HepG2 (cell line): ENCODE measurements at regions of chr9 and their contacts with region 1.

Region 1: GRCh38 chr9:99140685-99141314 is 35.9 kb downstream of the TGFBR1 start:
- DNase-seq: peak; percentile 35
- ATAC-seq: peak; percentile 79
- H3K4me3 ChIP-seq: no peak overlapping the region
- H3K27ac ChIP-seq: no peak overlapping the region
- H3K4me1 ChIP-seq: no peaks in the 10 kb centered on the region
- H3K27me3 ChIP-seq: no peaks in the 10 kb centered on the region
- CTCF ChIP-seq: peak; percentile 75
- EP300 ChIP-seq: no peak
- POLR2A ChIP-seq: no peak
- RAD21 ChIP-seq: peak; percentile 77

Region 2: GRCh38 chr9:98974994-98975712 is 165.6 kb before region 1 on chr9:
- CTCF ChIA-PET with region 1: interaction called, 18 read pairs
- POLR2A ChIA-PET with region 1: no interaction called
- in situ Hi-C with region 1: loop called (anchors 10 kb)
- intact Hi-C with region 1: no loop called
- DNase-seq: peak; percentile 34
- ATAC-seq: peak; percentile 94
- H3K4me3 ChIP-seq: peak overlapping the region in 1 of 3 experiments; percentile 15; a peak in 1 of 6 replicates
- H3K27ac ChIP-seq: no peak overlapping the region
- H3K4me1 ChIP-seq: peaks cover 6% of the 10 kb centered on the region
- H3K27me3 ChIP-seq: peaks cover 4 to 43% of the 10 kb centered on the region in 2 experiments; a peak in 3 of 5 replicates
- CTCF ChIP-seq: peak; percentile 94
- EP300 ChIP-seq: no peak
- POLR2A ChIP-seq: no peak
- RAD21 ChIP-seq: peak; percentile 76

Region 3: DNA sequence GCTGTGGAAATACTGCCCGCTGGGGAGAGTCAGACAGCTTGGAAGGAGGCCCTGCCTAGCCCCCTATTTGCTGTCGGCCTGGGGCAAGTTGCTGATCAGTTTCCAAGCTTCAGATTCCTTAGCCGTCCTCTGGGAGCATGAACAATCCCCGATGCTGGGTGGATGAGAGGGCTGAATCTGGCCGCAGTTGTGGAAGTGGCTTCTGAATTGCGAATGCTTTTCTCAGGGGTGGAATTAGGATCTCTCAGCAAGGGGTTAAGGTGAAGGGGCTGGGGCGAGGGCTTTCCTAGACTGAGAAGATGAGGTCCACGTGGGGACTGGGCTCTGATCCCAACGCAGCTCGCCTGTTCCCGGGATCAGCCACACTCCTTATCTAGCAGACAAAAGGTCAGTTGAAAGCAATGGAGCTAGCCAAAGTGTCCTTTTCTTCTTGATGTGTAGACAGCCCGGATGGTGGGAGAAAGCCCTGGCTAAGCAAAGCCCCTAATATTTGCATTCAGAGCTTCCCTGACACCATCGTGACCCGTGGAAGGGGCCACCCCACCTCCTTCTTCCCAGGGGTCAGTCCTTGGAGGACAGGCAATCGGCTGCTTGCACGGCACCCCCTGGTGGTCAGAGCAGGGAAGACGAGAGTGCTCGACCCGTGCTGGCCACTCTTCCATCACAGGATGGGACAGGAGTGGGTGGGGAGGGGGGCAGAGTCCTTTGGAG is 142.2 kb before region 1 on chr9:
- CTCF ChIA-PET with region 1: interaction called, 19 read pairs
- POLR2A ChIA-PET with region 1: no interaction called
- in situ Hi-C with region 1: loop called (anchors 5 kb)
- intact Hi-C with region 1: no loop called
- DNase-seq: peak; percentile 20
- ATAC-seq: peak; percentile 97
- H3K4me3 ChIP-seq: no peak overlapping the region
- H3K27ac ChIP-seq: no peak overlapping the region
- H3K4me1 ChIP-seq: no peaks in the 10 kb centered on the region
- H3K27me3 ChIP-seq: peaks cover 0 to 9% of the 10 kb centered on the region in 2 experiments; a peak in 1 of 5 replicates
- CTCF ChIP-seq: peak; percentile 92
- EP300 ChIP-seq: no peak
- POLR2A ChIP-seq: no peak
- RAD21 ChIP-seq: peak; percentile 53; the same call in 1 of the 2 replicates

Region 4: DNA sequence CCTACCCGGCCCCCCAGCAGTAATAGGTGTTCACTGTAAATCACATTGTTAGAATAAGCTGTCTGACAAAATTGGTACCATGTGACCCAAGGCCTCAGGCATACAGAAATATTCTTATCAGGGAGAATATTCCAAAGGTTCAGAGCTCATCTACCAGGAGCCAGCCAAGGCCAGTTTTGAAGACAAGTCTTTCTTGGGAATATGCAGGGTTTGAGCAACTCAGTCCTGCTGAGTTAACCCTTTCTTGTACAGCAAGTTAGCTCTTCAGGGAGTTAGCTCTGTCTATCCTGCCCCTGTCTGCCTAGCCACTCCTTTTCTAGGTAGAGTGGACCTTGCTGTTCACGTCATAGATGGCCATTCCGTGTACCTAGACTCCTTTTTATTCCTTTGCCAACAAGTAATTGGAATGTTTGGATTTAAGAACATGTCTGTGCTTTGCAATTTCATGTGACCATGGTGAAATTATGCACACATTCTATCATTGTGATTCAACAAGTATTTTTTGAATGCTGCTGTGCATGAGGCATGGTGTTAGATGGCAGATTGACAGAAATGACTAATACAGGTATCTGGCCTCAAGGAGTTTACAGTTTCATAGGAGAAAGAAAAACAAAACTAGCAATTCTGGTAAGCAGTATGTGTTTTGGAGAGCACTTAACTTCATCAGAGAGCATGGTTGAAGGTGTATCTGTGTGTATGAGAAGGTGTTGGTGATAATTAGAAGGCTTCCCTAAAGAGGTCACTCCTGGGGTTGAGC is 13.2 kb before region 1 on chr9:
- CTCF ChIA-PET with region 1: no interaction called
- POLR2A ChIA-PET with region 1: no interaction called
- in situ Hi-C with region 1: no loop called
- intact Hi-C with region 1: no loop called
- DNase-seq: no peak
- ATAC-seq: no peak
- H3K4me3 ChIP-seq: no peak overlapping the region
- H3K27ac ChIP-seq: no peak overlapping the region
- H3K4me1 ChIP-seq: no peaks in the 10 kb centered on the region
- H3K27me3 ChIP-seq: no peaks in the 10 kb centered on the region
- CTCF ChIP-seq: no peak
- EP300 ChIP-seq: no peak
- POLR2A ChIP-seq: no peak
- RAD21 ChIP-seq: no peak

Region 5: DNA sequence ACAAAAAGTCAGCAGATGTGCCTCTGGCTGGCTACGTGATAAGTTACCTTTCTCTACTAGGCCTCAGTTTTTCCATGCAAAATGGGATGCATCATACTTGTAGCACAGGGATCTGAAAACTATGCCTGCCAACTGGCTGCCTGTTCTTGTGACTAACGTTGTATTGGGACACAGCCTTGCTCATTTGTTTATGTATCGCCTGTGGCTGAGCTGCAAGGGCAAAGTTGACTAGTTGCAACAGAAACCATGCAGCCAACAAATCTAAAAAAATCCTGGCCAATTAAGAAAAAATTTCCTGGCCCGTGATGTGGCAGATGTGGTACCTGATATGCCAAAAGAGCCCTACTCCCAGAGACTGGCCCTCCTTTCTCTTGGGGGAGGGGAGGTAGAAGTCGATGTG is 212.6 kb after region 1 on chr9:
- CTCF ChIA-PET with region 1: no interaction called
- POLR2A ChIA-PET with region 1: no interaction called
- in situ Hi-C with region 1: no loop called
- intact Hi-C with region 1: no loop called
- DNase-seq: no peak
- ATAC-seq: no peak
- H3K4me3 ChIP-seq: no peak overlapping the region
- H3K27ac ChIP-seq: no peak overlapping the region
- H3K4me1 ChIP-seq: no peaks in the 10 kb centered on the region
- H3K27me3 ChIP-seq: peaks cover 0 to 7% of the 10 kb centered on the region in 2 experiments; a peak in 2 of 5 replicates
- CTCF ChIP-seq: no peak
- EP300 ChIP-seq: no peak
- POLR2A ChIP-seq: no peak
- RAD21 ChIP-seq: no peak